ENCODE measurements at regions of chr14 and their contacts with region 1.

Region 1: DNA sequence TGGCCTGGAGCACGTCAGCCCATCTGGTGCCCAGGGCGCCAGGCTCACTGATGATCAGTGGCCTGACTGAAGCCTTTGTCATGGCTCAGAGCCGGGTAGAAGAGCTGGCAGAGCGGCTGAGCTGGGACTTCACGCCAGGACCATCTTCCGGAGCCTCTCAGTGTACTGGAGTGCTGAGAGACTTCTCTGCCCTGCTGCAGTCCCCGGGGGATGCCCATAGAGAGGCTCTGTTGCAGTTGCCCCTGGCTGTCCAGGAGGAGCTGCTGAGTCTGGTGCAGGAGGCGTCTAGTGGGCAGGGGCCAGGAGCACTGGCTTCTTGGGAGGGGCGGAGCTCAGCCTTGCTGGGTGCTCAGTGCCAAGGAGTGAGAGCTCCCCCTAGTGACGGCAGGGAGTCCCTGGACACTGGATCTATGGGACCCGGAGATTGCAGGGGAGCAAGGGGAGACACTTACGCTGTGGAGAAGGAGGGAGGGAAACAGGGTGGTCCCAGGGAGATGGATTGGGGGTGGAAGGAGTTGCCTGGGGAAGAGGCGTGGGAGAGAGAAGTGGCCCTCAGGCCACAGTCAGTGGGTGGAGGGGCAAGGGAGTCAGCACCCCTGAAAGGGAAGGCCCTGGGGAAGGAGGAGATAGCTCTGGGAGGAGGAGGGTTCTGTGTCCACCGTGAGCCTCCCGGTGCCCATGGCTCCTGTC is 2.0 kb downstream of the KHNYN start:
- DNase-seq: peak; percentile 92
- H3K4me3 ChIP-seq: peak overlapping the region in 2 of 3 experiments; percentile 78 to 89
- H3K27ac ChIP-seq: peak overlapping the region; percentile 94
- H3K4me1 ChIP-seq: peaks cover 46% of the 10 kb centered on the region
- H3K27me3 ChIP-seq: no peaks in the 10 kb centered on the region
- CTCF ChIP-seq: peak; percentile 95 to 97
- POLR2A ChIP-seq: no peak

Region 2: DNA sequence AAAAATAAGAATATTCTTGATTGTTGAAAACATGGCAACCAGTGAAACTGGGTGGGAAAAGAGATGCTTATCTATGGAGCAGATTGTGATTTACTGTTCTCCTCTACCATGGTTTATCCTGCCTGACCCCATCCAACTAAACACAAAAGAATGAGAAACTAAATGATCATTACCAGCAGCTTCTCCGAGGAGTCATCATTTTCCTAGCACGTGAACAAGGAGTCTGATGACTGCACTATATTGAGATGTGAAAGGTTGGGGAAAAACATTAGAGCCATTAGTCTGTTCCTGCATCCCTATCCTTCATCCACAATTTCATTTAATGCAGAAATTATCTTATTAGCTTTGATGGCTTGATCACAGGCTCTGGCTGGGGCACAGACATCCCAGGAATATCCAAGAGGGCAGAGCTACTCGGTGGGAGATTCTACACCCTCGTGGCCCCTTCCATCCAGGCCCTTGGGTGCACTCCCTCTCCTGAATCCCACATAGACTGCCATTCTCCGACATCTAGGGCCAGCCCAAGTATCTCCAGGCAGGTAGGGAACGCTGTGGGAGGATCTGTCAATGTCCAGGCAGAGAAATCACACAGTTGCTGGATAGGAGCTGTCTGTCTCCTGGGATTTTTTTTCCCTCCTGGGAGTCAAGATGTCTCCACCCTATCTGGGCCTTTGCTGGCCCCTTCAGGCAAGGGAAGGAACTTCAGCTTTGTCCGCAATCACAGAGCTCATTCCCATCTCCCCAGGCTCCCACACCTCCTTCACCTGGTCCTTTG is 521.4 kb before region 1 on chr14:
- CTCF ChIA-PET with region 1: no interaction called
- POLR2A ChIA-PET with region 1: no interaction called
- dilution Hi-C with region 1: no loop called
- intact Hi-C with region 1: no loop called
- DNase-seq: peak; percentile 58
- H3K4me3 ChIP-seq: no peak overlapping the region
- H3K27ac ChIP-seq: no peak overlapping the region
- H3K4me1 ChIP-seq: no peaks in the 10 kb centered on the region
- H3K27me3 ChIP-seq: peaks cover 0 to 3% of the 10 kb centered on the region in 2 experiments
- CTCF ChIP-seq: peak; percentile 66 to 84
- POLR2A ChIP-seq: no peak

Region 3: DNA sequence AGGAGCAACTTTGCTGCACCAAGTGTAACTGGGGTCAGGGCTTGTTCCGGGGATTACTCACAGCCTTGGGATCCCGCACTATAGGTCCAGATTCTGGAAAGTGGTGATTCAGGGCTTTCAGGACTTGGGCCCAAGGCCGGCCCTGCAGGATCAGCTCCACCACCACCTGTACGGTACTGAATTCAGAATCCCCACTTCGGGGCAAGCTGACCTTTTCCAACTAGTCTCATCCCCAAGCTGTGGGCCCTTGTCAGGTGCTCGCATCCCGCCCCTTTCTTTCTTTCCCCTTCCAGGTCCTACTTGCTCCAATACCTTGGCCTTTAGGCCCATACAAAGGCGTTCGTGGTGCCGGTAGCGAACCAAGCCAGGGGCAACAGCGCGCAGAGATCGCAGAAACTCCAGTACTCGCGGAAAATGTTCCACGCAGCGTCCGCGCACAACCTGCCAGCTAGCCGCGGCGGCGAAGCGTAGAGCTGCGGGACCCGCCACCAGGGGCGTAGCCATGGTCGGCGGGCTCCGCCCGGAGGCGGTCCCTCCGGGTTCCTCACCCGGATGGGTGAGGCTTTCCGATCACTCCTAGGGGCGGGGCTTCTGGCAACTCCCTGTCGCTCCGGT is 189.8 kb before region 1 on chr14:
- CTCF ChIA-PET with region 1: interaction called, 19 read pairs
- POLR2A ChIA-PET with region 1: no interaction called
- dilution Hi-C with region 1: no loop called
- intact Hi-C with region 1: loop called (anchors 1 kb)
- DNase-seq: no peak
- H3K4me3 ChIP-seq: peak overlapping the region; percentile 31 to 67 (median 57)
- H3K27ac ChIP-seq: peak overlapping the region; percentile 98
- H3K4me1 ChIP-seq: peaks cover 30% of the 10 kb centered on the region
- H3K27me3 ChIP-seq: no peaks in the 10 kb centered on the region
- CTCF ChIP-seq: peak; percentile 16 to 75
- POLR2A ChIP-seq: no peak

Region 4: DNA sequence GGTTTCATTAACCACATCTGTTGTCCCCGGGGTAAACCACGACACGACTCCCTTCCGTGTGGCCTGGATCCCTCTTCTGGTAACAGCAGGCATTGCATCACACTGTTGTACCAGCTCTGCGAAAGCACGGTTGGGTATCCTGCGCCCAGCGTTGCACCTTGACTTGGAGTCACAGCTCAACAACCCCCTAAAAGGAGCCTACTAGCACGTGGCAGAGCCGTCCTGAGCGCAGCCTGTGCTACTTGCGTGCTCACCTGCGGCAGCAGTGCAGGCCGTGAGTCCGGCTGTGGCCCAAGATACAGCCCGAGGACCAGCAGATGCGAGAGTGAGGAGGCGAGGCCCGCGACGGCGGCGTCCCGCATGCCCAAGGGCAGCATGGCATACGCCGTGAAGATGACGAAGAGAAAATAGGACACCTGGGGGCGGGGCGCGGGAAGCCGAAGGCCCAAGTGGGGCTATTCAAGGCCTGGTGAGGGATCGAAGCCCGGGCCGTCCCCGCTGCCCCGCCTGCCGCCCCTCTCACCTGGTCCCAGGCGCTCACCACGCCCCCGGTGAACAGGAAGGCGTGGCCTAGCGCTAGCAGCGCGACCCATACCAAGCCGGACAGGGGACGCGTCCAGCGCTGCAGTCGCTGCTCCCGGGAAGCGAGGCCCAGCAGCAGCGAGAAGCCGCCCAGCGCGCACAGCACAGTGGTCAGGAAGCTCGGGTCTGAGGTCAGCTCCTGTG is 99.3 kb before region 1 on chr14:
- CTCF ChIA-PET with region 1: interaction called, 811 read pairs
- POLR2A ChIA-PET with region 1: interaction called, 32 read pairs
- dilution Hi-C with region 1: no loop called
- intact Hi-C with region 1: loop called (anchors 1 kb)
- DNase-seq: peak; percentile 45
- H3K4me3 ChIP-seq: no peak overlapping the region
- H3K27ac ChIP-seq: no peak overlapping the region
- H3K4me1 ChIP-seq: peaks cover 29% of the 10 kb centered on the region
- H3K27me3 ChIP-seq: no peaks in the 10 kb centered on the region
- CTCF ChIP-seq: peak; percentile 55 to 72
- POLR2A ChIP-seq: no peak

Region 5: GRCh38 chr14:24392325-24393091 is 39.2 kb before region 1 on chr14:
- CTCF ChIA-PET with region 1: interaction called, 17 read pairs
- POLR2A ChIA-PET with region 1: no interaction called
- dilution Hi-C with region 1: no loop called
- intact Hi-C with region 1: loop called (anchors 1 kb)
- DNase-seq: peak; percentile 70
- H3K4me3 ChIP-seq: peak overlapping the region in 1 of 3 experiments; percentile 19
- H3K27ac ChIP-seq: peak overlapping the region; percentile 48
- H3K4me1 ChIP-seq: peaks cover 23% of the 10 kb centered on the region
- H3K27me3 ChIP-seq: peaks cover 0 to 3% of the 10 kb centered on the region in 2 experiments
- CTCF ChIP-seq: peak in 1 of 2 donors; percentile 12
- POLR2A ChIP-seq: no peak

Region 6: DNA sequence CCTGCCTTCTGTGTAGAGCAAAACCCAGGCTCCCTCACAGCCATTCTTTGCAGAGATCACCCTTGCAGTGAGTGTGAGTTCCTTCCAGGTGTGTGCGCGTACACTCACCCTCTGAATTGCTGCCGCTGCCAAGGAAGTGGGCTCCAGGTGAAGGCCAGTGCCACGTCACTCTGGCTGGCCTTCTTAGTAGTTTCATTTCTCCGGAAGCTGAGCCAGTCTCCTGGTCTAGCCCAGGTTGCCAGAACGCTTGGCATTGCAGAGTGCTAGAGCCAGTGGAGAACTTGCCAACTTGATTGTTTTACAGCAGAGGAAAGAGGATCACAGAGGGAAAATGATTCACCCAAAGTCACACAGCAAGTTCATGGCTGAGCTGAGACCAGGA is 13.2 kb before region 1 on chr14:
- CTCF ChIA-PET with region 1: interaction called, 50 read pairs
- POLR2A ChIA-PET with region 1: interaction called, 5 read pairs
- dilution Hi-C with region 1: no loop called
- intact Hi-C with region 1: no loop called
- DNase-seq: peak; percentile 78
- H3K4me3 ChIP-seq: no peak overlapping the region
- H3K27ac ChIP-seq: peak overlapping the region; percentile 65
- H3K4me1 ChIP-seq: peaks cover 21% of the 10 kb centered on the region
- H3K27me3 ChIP-seq: no peaks in the 10 kb centered on the region
- CTCF ChIP-seq: no peak
- POLR2A ChIP-seq: peak; percentile 32

Region 7: GRCh38 chr14:24695265-24696241 is 263.8 kb after region 1 on chr14:
- CTCF ChIA-PET with region 1: no interaction called
- POLR2A ChIA-PET with region 1: no interaction called
- dilution Hi-C with region 1: no loop called
- intact Hi-C with region 1: no loop called
- DNase-seq: no peak
- H3K4me3 ChIP-seq: no peak overlapping the region
- H3K27ac ChIP-seq: no peak overlapping the region
- H3K4me1 ChIP-seq: no peaks in the 10 kb centered on the region
- H3K27me3 ChIP-seq: no peaks in the 10 kb centered on the region
- CTCF ChIP-seq: no peak
- POLR2A ChIP-seq: no peak